Dorsolateral prefrontal cortex (tissue), 120 donors: ENCODE measurements at regions of chr6 and their contacts with region 1.

Region 1: DNA sequence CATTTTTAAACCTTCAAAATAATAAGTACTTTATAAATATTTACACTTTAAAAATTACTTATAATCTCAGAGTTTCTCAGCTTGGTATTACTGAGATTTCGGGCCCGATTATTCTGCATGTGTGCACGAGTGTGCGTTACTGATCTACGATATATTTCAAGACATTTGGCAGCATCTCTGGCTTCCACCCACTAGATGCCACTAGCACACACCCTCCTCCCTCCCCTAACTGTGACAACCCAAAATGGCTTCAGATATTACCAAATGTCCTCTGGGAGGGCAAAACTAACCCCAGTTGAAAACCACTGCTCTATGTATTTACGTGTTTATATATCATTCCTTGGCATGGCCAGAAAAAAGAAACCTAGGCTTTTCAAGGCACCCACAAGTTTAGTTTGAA is 95.9 kb downstream of the FYN start:
- DNase-seq: no peak
- H3K4me3 ChIP-seq: peak overlapping the region in 1 of 59 donors; percentile 15
- H3K27ac ChIP-seq: peak overlapping the region in 52 of 59 donors; percentile 1 to 82 (median 57)
- H3K27me3 ChIP-seq: no peaks in the 10 kb centered on the region
- CTCF ChIP-seq: peak in 32 of 56 donors; percentile 5 to 55 (median 28)

Region 2: DNA sequence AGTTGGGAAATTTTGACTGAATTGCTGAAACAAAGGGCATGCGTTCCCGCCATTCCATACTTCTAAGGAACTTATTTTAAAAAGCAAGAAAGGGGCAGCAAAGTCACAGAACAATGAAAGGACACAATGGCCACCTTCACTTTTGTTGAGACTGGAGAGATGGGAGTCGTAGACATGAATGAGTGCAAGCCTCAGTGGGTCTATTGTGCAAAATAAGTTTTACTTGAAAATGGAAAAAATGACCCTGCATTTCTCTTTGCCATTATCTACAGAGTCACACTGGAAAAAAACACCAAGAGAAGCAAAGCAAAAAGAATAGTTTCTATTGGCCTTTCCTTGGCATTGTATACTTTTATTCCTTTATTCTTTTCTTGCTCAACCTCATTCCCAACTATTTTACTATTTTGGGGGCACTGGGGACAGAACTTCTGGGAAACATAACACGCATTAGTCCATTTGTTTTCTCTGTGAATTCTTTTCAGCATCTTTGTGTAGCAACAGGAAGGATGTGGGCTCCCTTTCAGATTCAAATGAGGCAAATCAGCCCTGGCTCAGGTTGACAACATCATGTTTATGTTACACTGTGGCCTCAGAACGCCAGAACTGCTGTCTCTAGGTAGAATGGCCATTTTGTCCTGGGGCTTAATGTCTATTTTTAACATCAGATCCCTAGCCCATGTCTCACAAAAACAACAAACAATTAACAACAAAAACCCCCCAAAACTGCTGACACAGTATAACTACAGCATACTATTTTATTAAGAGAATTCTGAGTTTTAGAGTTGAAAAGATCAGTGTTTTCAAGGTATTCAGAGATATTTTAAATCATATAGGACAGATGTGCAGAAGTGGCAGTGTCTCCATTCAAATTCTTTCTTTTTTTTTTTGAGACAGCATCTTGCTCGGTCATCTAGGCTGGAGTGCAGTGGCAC is 26.3 kb before region 1 on chr6:
- intact Hi-C with region 1: no loop called
- DNase-seq: no peak
- H3K4me3 ChIP-seq: no peak overlapping the region
- H3K27ac ChIP-seq: peak overlapping the region in 36 of 59 donors; percentile 0 to 72 (median 35)
- H3K27me3 ChIP-seq: no peaks in the 10 kb centered on the region
- CTCF ChIP-seq: no peak

Region 3: DNA sequence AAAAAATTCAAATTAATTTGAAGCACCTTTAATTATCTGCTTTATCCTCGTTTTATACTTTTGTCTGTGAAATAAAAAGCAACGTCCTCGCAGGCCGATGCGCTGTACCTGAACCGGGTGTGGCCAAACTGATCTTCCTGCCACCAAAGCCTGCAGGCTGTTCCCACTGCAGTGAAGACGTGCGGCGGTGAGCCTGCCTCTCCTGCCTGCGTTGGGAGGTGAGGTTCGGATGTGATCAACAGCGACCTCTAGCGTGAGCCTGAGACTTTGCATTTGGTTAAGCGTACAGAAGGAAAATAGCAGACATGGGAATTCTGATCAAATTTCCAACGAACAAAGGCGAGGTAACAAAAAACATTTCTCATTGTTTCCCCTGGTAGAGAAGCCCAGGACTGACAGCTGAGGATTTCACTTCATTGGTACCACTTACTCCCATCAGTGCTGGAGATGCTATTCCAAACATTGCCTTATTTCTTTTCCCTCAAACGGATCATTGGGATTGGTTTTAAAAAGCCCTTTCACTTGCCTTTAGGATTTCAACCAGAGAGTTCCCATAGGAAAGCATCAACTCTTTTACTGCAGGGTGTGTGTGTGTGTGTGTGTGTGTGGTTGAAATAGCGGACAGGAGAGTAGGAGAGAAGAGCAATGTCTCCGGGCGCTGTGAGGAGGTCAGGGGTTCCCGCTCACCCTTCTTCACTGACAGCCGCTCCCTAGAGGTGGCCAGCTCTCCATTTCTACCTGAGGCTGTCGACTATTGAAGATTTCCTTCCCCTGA is 219.9 kb after region 1 on chr6:
- intact Hi-C with region 1: loop called in 1 of 2 experiments (anchors 10 kb)
- DNase-seq: peak; percentile 57 to 88 (median 81)
- H3K4me3 ChIP-seq: peak overlapping the region in 45 of 59 donors; percentile 2 to 56 (median 29)
- H3K27ac ChIP-seq: peak overlapping the region in 11 of 59 donors; percentile 4 to 61 (median 32)
- H3K27me3 ChIP-seq: no peaks in the 10 kb centered on the region
- CTCF ChIP-seq: peak; percentile 88 to 99 (median 95)